Natural killer cell (primary cell): ENCODE measurements at regions of chr13 and their contacts with region 1.

Region 1: DNA sequence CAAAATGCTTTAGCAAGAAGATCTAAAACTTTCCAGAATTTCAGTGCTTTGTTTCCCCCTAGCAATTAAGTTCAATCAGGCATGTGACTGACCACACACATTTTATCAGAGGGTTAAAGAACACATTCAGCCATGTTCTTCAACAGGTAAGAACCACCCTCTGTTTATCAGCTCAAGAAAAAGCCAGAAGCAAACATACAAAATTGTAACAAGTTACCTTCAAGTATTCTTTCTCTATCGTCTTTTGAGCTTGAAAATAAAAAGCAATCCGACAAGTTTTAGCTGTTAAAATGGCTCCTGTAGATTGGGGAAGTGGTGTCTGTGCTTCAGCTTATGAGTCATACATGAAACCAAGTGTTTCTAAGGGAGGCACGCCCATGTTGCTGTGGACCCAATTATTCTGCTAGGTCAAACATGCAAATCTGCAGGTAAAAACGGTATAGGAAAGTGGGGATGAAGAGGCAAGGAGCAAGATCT is at the start of gene ELF1:
- DNase-seq: peak; percentile 32 to 87
- ATAC-seq: peak; percentile 87 to 93 (median 91)
- H3K4me3 ChIP-seq: peak within 1 kb of the TSS; percentile 94
- H3K4me3 Mint-ChIP-seq: peak within 1 kb of the TSS; percentile 99
- H3K27ac ChIP-seq: peak within 1 kb of the TSS; percentile 100
- H3K27ac Mint-ChIP-seq: peak within 1 kb of the TSS; percentile 91 to 98
- H3K4me1 ChIP-seq: peaks cover 6% of the 10 kb centered on the region
- H3K4me1 Mint-ChIP-seq: peaks cover 45 to 52% of the 10 kb centered on the region in 2 donors
- H3K27me3 ChIP-seq: no peaks in the 10 kb centered on the region
- H3K27me3 Mint-ChIP-seq: no peaks in the 10 kb centered on the region
- CTCF ChIP-seq: no peak
- total RNA-seq, gene ELF1: 174 to 216 (median 193) TPM

Region 2: GRCh38 chr13:40969169-40969901 is 49.7 kb before region 1 on chr13:
- intact Hi-C with region 1: loop called (anchors 10 kb)
- DNase-seq: peak in 1 of 2 donors; percentile 56
- ATAC-seq: peak; percentile 32 to 64 (median 39)
- H3K4me3 ChIP-seq: no peak overlapping the region
- H3K4me3 Mint-ChIP-seq: peak overlapping the region; percentile 75
- H3K27ac ChIP-seq: peak overlapping the region; percentile 15
- H3K27ac Mint-ChIP-seq: peak overlapping the region; percentile 85 to 89
- H3K4me1 ChIP-seq: peaks cover 34% of the 10 kb centered on the region
- H3K4me1 Mint-ChIP-seq: peaks cover 92 to 93% of the 10 kb centered on the region in 2 donors
- H3K27me3 ChIP-seq: no peaks in the 10 kb centered on the region
- H3K27me3 Mint-ChIP-seq: no peaks in the 10 kb centered on the region
- CTCF ChIP-seq: no peak

Region 3: GRCh38 chr13:41004875-41005693 is 14.0 kb before region 1 on chr13:
- intact Hi-C with region 1: loop called (anchors 1 kb)
- DNase-seq: peak in 1 of 2 donors; percentile 78
- ATAC-seq: peak; percentile 75 to 88 (median 87)
- H3K4me3 ChIP-seq: peak overlapping the region; percentile 15
- H3K4me3 Mint-ChIP-seq: peak overlapping the region; percentile 73
- H3K27ac ChIP-seq: peak overlapping the region; percentile 73
- H3K27ac Mint-ChIP-seq: peak overlapping the region; percentile 88 to 93
- H3K4me1 ChIP-seq: peaks cover 23% of the 10 kb centered on the region
- H3K4me1 Mint-ChIP-seq: peaks cover 56 to 65% of the 10 kb centered on the region in 2 donors
- H3K27me3 ChIP-seq: no peaks in the 10 kb centered on the region
- H3K27me3 Mint-ChIP-seq: no peaks in the 10 kb centered on the region
- CTCF ChIP-seq: no peak